GM12878 (cell line): ENCODE measurements at regions of chr10 and their contacts with region 1.

Region 1: GRCh38 chr10:103685880-103686669 is 169.3 kb downstream of the SH3PXD2A start:
- DNase-seq: no peak
- ATAC-seq: peak; percentile 90
- H3K4me3 ChIP-seq: no peak overlapping the region
- H3K27ac ChIP-seq: no peak overlapping the region
- H3K4me1 ChIP-seq: peaks cover 16% of the 10 kb centered on the region
- H3K27me3 ChIP-seq: no peaks in the 10 kb centered on the region
- CTCF ChIP-seq: peak; percentile 94 to 99 (median 98)
- EP300 ChIP-seq: no peak
- POLR2A ChIP-seq: no peak
- RAD21 ChIP-seq: peak; percentile 90

Region 2: GRCh38 chr10:103168486-103169311 is 517.4 kb before region 1 on chr10:
- CTCF ChIA-PET with region 1: no interaction called
- POLR2A ChIA-PET with region 1: no interaction called
- RAD21 ChIA-PET with region 1: no interaction called
- SMC1A ChIA-PET with region 1: no interaction called
- in situ Hi-C with region 1: no loop called
- intact Hi-C with region 1: no loop called
- DNase-seq: no peak
- ATAC-seq: no peak
- H3K4me3 ChIP-seq: no peak overlapping the region
- H3K27ac ChIP-seq: no peak overlapping the region
- H3K4me1 ChIP-seq: no peaks in the 10 kb centered on the region
- H3K27me3 ChIP-seq: no peaks in the 10 kb centered on the region
- CTCF ChIP-seq: no peak
- EP300 ChIP-seq: no peak
- POLR2A ChIP-seq: no peak
- RAD21 ChIP-seq: no peak

Region 3: GRCh38 chr10:103476046-103476995 is 209.8 kb before region 1 on chr10:
- CTCF ChIA-PET with region 1: interaction called, 13 read pairs
- POLR2A ChIA-PET with region 1: no interaction called
- RAD21 ChIA-PET with region 1: interaction called, 3 read pairs
- SMC1A ChIA-PET with region 1: interaction called, 3 read pairs
- in situ Hi-C with region 1: no loop called
- intact Hi-C with region 1: no loop called
- DNase-seq: no peak
- ATAC-seq: peak; percentile 80
- H3K4me3 ChIP-seq: no peak overlapping the region
- H3K27ac ChIP-seq: no peak overlapping the region
- H3K4me1 ChIP-seq: peaks cover 29% of the 10 kb centered on the region
- H3K27me3 ChIP-seq: no peaks in the 10 kb centered on the region
- CTCF ChIP-seq: peak; percentile 55 to 80 (median 67)
- EP300 ChIP-seq: no peak
- POLR2A ChIP-seq: no peak
- RAD21 ChIP-seq: peak; percentile 66

Region 4: DNA sequence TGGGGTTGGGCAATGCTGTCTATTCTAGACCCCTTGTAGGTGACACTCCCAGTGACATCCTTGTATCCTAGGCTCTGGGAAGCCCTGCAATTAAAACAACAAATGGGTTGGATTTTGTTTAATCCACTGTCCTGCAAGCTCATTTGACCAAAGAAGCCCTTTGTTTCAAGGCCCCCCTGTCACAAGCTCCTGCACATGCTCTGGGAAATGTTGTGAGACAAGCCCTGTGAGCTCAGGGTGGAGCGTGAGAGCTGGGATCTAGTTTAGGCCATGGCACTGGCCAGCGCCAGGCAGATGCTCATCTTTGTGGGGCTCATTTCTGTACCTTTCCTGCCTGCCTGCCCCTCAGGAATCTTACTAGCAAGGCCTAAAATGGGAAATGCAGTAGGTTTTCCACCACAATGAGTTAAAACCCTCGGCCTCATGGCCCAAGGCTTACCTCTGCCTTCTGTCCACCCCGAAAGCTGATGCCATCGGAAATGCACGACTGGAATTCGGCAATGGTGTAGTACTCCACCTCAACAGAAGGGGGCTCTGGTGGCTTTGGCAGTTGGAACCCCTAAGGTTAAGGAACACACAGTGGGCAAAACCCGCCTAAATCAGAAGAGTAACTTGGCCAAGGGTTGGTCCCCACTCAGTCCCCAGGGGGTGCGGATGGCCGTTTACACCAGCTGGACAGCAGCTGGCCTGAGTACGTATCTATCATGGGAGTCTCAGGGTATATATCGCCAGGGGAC is 80.5 kb before region 1 on chr10:
- CTCF ChIA-PET with region 1: interaction called, 61 read pairs
- POLR2A ChIA-PET with region 1: interaction called, 3 read pairs
- RAD21 ChIA-PET with region 1: interaction called, 18 read pairs
- SMC1A ChIA-PET with region 1: interaction called, 19 read pairs
- in situ Hi-C with region 1: loop called (anchors 10 kb)
- intact Hi-C with region 1: loop called (anchors 1 kb)
- DNase-seq: no peak
- ATAC-seq: peak; percentile 61
- H3K4me3 ChIP-seq: no peak overlapping the region
- H3K27ac ChIP-seq: no peak overlapping the region
- H3K4me1 ChIP-seq: no peaks in the 10 kb centered on the region
- H3K27me3 ChIP-seq: no peaks in the 10 kb centered on the region
- CTCF ChIP-seq: peak; percentile 62 to 74 (median 66); a peak in 5 of 6 replicates
- EP300 ChIP-seq: no peak
- POLR2A ChIP-seq: no peak
- RAD21 ChIP-seq: peak; percentile 61

Region 5: DNA sequence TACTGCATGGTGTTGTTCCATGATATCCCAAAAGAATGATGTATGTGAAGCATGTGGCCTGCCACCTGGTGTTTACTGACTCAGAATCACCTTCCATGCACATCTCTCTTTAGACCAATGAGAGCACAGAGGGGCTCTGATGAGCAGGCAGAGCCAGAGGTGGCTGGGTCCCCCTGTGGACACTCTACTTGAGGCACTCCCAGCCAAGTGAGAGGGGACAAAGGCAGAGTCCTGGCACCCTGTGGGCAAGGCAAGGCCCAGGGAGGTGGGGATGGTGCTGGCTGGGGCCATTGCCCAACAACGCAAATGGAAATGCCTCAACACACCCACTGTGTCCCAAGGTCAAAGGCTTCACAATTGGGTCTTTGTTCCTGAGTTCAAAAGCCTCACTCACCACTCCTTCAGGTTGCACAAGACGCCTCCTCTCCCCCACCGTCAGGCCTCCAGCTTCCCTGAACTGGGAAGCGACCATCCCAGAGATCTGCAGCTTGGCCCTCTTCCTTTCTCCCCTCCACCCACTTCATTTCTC is 28.0 kb before region 1 on chr10:
- CTCF ChIA-PET with region 1: interaction called, 13 read pairs
- POLR2A ChIA-PET with region 1: interaction called, 4 read pairs
- RAD21 ChIA-PET with region 1: interaction called, 5 read pairs
- SMC1A ChIA-PET with region 1: no interaction called
- in situ Hi-C with region 1: no loop called
- intact Hi-C with region 1: no loop called
- DNase-seq: no peak
- ATAC-seq: no peak
- H3K4me3 ChIP-seq: no peak overlapping the region
- H3K27ac ChIP-seq: no peak overlapping the region
- H3K4me1 ChIP-seq: peaks cover 8% of the 10 kb centered on the region
- H3K27me3 ChIP-seq: no peaks in the 10 kb centered on the region
- CTCF ChIP-seq: no peak
- EP300 ChIP-seq: no peak
- POLR2A ChIP-seq: no peak
- RAD21 ChIP-seq: no peak

Region 6: DNA sequence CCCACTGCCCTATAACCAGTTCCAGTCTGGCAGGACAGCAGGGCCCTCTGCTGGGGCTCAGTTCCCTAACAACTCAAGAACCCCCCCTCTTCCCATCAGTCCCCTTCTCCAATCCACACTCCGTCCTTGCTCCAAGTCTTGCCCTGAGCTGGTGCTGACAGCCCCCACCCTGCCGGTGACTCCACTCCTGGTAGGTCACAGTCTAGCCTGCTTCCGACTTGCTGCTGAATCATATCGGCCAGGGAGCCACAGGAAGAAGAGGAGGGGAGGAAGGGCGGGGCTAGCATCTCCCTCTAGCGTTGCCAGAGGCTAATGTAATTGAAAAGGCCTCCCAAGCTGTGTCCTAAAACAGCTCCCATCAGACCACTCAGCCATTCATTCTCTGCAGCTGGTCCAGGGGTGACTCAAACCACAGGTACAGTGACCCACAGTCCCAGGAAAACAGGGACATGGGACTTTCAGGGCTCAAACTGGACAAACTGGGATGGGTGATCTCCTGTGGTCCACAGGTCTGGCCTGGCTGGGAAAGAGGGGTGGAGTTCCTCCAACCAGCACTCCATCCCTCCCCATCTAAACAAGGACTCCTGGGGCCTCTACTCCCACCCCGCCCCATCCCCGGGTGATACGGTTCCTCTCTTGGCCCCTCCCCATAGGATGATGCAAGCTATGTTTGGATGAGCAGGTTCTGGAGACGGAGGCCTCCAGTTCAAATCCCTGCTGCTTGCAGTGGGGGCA is 10.5 kb after region 1 on chr10:
- CTCF ChIA-PET with region 1: interaction called, 35 read pairs
- POLR2A ChIA-PET with region 1: no interaction called
- RAD21 ChIA-PET with region 1: interaction called, 11 read pairs
- SMC1A ChIA-PET with region 1: interaction called, 17 read pairs
- in situ Hi-C with region 1: no loop called
- intact Hi-C with region 1: no loop called
- DNase-seq: no peak
- ATAC-seq: peak; percentile 61
- H3K4me3 ChIP-seq: no peak overlapping the region
- H3K27ac ChIP-seq: peak overlapping the region; percentile 54
- H3K4me1 ChIP-seq: peaks cover 29% of the 10 kb centered on the region
- H3K27me3 ChIP-seq: no peaks in the 10 kb centered on the region
- CTCF ChIP-seq: peak; percentile 33 to 50 (median 44); a peak in 5 of 6 replicates
- EP300 ChIP-seq: no peak
- POLR2A ChIP-seq: peak; percentile 55; the same call in 1 of the 2 replicates
- RAD21 ChIP-seq: no peak

Region 7: DNA sequence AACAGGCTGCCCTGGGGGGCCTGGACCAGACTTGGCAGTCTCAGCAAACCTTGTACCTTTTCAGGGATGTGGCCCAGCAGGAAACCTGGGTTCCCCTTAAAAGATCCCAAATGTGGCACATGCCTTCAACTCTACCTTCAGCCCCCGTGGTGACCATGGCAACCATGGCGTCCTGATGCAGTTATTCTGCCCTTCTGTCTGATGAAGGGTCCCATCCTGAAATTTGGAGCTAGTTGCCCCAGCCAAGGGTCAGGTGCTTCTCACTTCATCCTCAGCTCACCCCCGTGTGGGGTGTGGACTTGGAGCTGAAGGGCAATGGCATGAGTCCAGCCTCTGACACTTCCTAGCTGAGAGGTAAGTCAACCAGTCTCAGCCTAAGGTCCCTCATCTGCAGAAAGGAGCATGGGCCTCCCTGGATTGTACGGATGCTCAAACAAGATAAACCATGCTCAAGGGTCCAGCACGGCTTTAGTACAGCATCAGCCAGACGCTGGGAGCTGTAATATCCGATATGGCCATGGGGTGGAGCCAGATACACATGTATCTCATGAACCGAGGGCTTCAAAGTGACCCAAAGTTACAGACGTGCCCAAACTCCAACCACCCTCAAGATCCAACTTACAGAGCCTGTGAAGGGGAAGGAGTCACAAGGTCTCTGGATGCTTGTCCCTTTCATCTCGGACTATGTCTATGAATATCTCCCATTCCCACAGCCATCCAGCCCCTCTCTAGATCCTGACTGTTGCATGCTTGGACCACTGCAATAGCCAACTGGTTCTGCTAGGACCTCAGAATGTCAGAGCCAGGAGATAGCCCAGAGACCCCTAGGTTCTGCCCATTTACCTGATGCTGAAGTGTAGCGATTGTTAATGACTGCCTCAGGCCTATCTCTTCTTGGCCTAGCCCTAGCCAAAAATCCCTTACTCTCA is 26.8 kb after region 1 on chr10:
- CTCF ChIA-PET with region 1: interaction called, 12 read pairs
- POLR2A ChIA-PET with region 1: no interaction called
- RAD21 ChIA-PET with region 1: interaction called, 6 read pairs
- SMC1A ChIA-PET with region 1: interaction called, 8 read pairs
- in situ Hi-C with region 1: no loop called
- intact Hi-C with region 1: no loop called
- DNase-seq: no peak
- ATAC-seq: peak; percentile 94
- H3K4me3 ChIP-seq: no peak overlapping the region
- H3K27ac ChIP-seq: no peak overlapping the region
- H3K4me1 ChIP-seq: no peaks in the 10 kb centered on the region
- H3K27me3 ChIP-seq: no peaks in the 10 kb centered on the region
- CTCF ChIP-seq: peak; percentile 79 to 92 (median 86)
- EP300 ChIP-seq: no peak
- POLR2A ChIP-seq: no peak
- RAD21 ChIP-seq: peak; percentile 94